ENCODE measurements at regions of chr3 and their contacts with region 1.

Region 1: GRCh38 chr3:123791898-123792297 is 92.2 kb downstream of the MYLK start:
- DNase-seq: no peak
- H3K4me3 ChIP-seq: no peak overlapping the region
- H3K27ac ChIP-seq: no peak overlapping the region
- H3K4me1 ChIP-seq: no peaks in the 10 kb centered on the region
- H3K27me3 ChIP-seq: no peaks in the 10 kb centered on the region
- CTCF ChIP-seq: no peak
- POLR2A ChIP-seq: no peak

Region 2: DNA sequence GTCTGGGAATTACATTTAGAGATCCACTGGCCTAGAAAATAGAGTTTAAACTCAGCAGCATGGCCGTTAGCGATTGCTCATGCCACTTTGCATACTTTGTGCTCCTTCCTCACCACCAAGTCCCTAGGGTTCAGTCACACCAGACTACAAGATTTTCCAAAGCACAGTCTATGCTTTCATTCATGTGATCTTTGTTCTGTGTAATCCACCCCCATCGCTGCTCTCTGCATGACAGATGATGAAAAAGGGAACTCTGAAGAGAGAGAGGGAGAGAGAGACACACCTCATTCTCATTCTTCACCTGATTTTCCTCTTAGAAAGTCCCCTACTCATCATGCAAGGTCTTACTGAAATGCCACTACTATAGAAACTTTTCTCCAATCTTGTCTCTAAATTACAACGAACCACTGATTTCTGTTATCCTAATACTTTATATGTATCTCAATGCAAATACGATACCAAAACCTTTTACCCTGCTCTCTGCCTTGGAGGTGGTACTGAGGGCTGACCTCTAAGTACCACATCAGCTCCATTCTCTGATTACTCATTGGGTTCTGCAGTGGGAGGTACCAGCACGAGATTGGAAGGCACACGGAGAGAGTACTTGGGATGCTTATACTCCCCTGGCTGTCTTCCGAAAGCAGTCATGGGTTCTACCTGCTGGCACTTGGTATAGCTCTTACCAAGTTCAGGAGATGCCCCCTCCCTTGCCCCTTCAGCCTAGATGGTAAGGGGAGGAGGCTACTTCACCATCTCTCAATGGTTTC is 1215.5 kb before region 1 on chr3:
- intact Hi-C with region 1: no loop called
- DNase-seq: no peak
- H3K4me3 ChIP-seq: no peak overlapping the region
- H3K27ac ChIP-seq: no peak overlapping the region
- H3K4me1 ChIP-seq: no peaks in the 10 kb centered on the region
- H3K27me3 ChIP-seq: no peaks in the 10 kb centered on the region
- CTCF ChIP-seq: no peak
- POLR2A ChIP-seq: no peak

Region 3: DNA sequence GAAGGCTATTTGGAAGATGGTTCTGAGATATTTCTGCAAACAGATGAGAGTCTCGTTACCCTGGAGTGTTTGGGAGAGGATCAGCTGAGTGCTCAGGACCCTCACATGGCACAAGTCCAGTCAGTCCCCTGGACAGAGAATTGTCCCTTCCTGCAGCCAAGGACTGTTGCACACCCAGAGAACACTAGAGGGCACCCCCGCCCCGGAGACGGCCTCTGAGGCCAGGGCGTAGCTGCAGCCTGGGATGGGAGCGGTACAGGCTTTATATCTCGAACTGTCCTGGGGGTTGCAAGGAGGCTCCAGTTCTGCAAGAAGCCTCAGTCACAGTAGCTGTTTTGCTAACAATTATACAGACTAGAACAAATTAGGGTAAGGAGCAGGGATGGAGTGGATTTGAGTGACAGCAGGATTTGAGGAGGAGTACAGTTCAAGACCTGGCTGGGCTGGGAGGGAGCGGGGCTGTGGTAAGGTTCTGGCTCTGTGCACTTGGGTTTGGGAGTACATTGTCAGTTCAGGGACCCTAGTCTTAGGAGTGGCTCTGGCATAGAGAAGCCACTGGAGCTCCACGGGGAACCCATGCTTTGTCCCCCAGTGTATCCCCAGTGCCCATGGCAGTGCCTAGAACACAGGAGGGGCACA is 139.4 kb before region 1 on chr3:
- intact Hi-C with region 1: loop called (anchors 5 kb)
- DNase-seq: peak; percentile 62 to 72
- H3K4me3 ChIP-seq: no peak overlapping the region
- H3K27ac ChIP-seq: peak overlapping the region; percentile 80 to 93
- H3K4me1 ChIP-seq: peaks cover 0 to 16% of the 10 kb centered on the region in 2 donors
- H3K27me3 ChIP-seq: no peaks in the 10 kb centered on the region
- CTCF ChIP-seq: peak in 2 of 3 donors; percentile 84 to 88
- POLR2A ChIP-seq: no peak

Region 4: GRCh38 chr3:123843668-123844067 is 51.8 kb after region 1 on chr3:
- intact Hi-C with region 1: no loop called
- DNase-seq: no peak
- H3K4me3 ChIP-seq: no peak overlapping the region
- H3K27ac ChIP-seq: no peak overlapping the region
- H3K4me1 ChIP-seq: no peaks in the 10 kb centered on the region
- H3K27me3 ChIP-seq: no peaks in the 10 kb centered on the region
- CTCF ChIP-seq: no peak
- POLR2A ChIP-seq: no peak

Measured in breast epithelium (tissue), 4 donors.